K562 (cell line): ENCODE measurements at regions of chr6 and their contacts with region 1.

Region 1: GRCh38 chr6:157323255-157323965 is at the start of gene TMEM242:
- DNase-seq: peak; percentile 87 to 97 (median 90)
- ATAC-seq: peak; percentile 92
- H3K4me3 ChIP-seq: peak within 1 kb of the TSS; percentile 66
- H3K27ac ChIP-seq: peak within 1 kb of the TSS; percentile 85
- H3K4me1 ChIP-seq: peaks cover 8 to 19% of the 10 kb centered on the region in 2 experiments
- H3K27me3 ChIP-seq: no peaks in the 10 kb centered on the region
- CTCF ChIP-seq: no peak
- EP300 ChIP-seq: peak; percentile 61
- POLR2A ChIP-seq: peak; percentile 100
- RAD21 ChIP-seq: peak in 1 of 2 experiments; percentile 44; a peak in 3 of 4 replicates
- polyA plus RNA-seq, gene TMEM242: 24.3 to 35.3 TPM

Region 2: GRCh38 chr6:157339432-157339831 is 16.0 kb after region 1 on chr6:
- CTCF ChIA-PET with region 1: no interaction called
- POLR2A ChIA-PET with region 1: interaction called, 68 read pairs
- in situ Hi-C with region 1: no loop called
- intact Hi-C with region 1: no loop called
- DNase-seq: no peak
- ATAC-seq: peak; percentile 39; the same call in 2 of the 3 replicates
- H3K4me3 ChIP-seq: no peak overlapping the region
- H3K27ac ChIP-seq: no peak overlapping the region
- H3K4me1 ChIP-seq: peaks cover 0 to 3% of the 10 kb centered on the region in 2 experiments; a peak in 3 of 5 replicates
- H3K27me3 ChIP-seq: peaks cover 0 to 4% of the 10 kb centered on the region in 2 experiments; a peak in 3 of 5 replicates
- CTCF ChIP-seq: peak; percentile 23 to 34 (median 31); a peak in 4 of 6 replicates
- EP300 ChIP-seq: no peak
- POLR2A ChIP-seq: no peak
- RAD21 ChIP-seq: peak in 1 of 2 experiments; percentile 68; a peak in 2 of 4 replicates

Region 3: GRCh38 chr6:158122048-158122447 is 798.6 kb after region 1 on chr6:
- CTCF ChIA-PET with region 1: no interaction called
- POLR2A ChIA-PET with region 1: no interaction called
- in situ Hi-C with region 1: no loop called
- intact Hi-C with region 1: no loop called
- DNase-seq: no peak
- ATAC-seq: peak; percentile 36; the same call in 1 of the 3 replicates
- H3K4me3 ChIP-seq: no peak overlapping the region
- H3K27ac ChIP-seq: no peak overlapping the region
- H3K4me1 ChIP-seq: peaks cover 0 to 5% of the 10 kb centered on the region in 2 experiments; a peak in 3 of 5 replicates
- H3K27me3 ChIP-seq: no peaks in the 10 kb centered on the region
- CTCF ChIP-seq: no peak
- EP300 ChIP-seq: no peak
- POLR2A ChIP-seq: no peak
- RAD21 ChIP-seq: no peak